RWPE1 (cell line): ENCODE measurements at regions of chr22 and their contacts with region 1.

Region 1: GRCh38 chr22:43526946-43527345 is 115.1 kb downstream of the MPPED1 start:
- DNase-seq: no peak
- H3K27ac ChIP-seq: no peak overlapping the region
- CTCF ChIP-seq: no peak

Region 2: GRCh38 chr22:43553451-43554258 is 26.7 kb after region 1 on chr22:
- CTCF ChIA-PET with region 1: no interaction called
- POLR2A ChIA-PET with region 1: interaction called, 12 read pairs
- DNase-seq: no peak
- H3K27ac ChIP-seq: no peak overlapping the region
- CTCF ChIP-seq: no peak